Activated CD4-positive, alpha-beta memory T cell treated with anti-CD3 and anti-CD28 coated beads for 36 hours (primary cell): ENCODE measurements at regions of chr12 and their contacts with region 1.

Region 1: DNA sequence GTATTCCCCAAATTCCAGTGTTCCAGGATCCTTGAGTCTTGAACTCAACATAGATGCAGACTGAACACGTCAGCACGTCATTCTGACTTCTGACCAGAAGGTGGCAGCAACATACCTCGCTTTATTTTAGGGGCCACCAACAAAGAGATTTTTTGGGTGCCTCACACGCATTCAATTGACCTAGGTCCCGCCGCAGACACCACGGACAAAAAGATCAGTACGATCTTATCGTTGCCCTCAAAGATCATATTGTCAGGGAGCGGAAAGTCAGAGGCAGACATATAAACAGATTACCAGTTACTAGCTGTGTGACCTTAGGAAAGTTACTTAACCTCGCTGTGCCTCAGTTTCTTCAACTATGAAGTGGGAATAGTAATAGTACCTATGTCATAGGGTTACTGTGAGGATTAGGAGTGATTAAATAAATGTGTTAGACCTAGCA is 6.5 kb upstream of the PRPH start:
- DNase-seq: peak; percentile 80
- H3K4me3 Mint-ChIP-seq: no peak overlapping the region
- H3K27ac Mint-ChIP-seq: no peak overlapping the region
- H3K4me1 Mint-ChIP-seq: no peaks in the 10 kb centered on the region
- H3K27me3 Mint-ChIP-seq: peaks cover 23% of the 10 kb centered on the region

Region 2: GRCh38 chr12:49336645-49337584 is 48.5 kb after region 1 on chr12 and contains the start of gene C1QL4:
- CTCF ChIA-PET with region 1: interaction called, 234 read pairs
- POLR2A ChIA-PET with region 1: interaction called, 7 read pairs
- intact Hi-C with region 1: loop called (anchors 1 kb)
- DNase-seq: peak; percentile 89
- H3K4me3 Mint-ChIP-seq: peak within 1 kb of the TSS; percentile 40
- H3K27ac Mint-ChIP-seq: no peak within 1 kb of the TSS
- H3K4me1 Mint-ChIP-seq: peaks cover 23% of the 10 kb centered on the region
- H3K27me3 Mint-ChIP-seq: peaks cover 64% of the 10 kb centered on the region
- total RNA-seq, gene C1QL4: not detected

Region 3: GRCh38 chr12:49553512-49554088 is 265.2 kb after region 1 on chr12:
- CTCF ChIA-PET with region 1: no interaction called
- POLR2A ChIA-PET with region 1: no interaction called
- intact Hi-C with region 1: no loop called
- DNase-seq: no peak
- H3K4me3 Mint-ChIP-seq: no peak overlapping the region
- H3K27ac Mint-ChIP-seq: no peak overlapping the region
- H3K4me1 Mint-ChIP-seq: peaks cover 3% of the 10 kb centered on the region
- H3K27me3 Mint-ChIP-seq: peaks cover 4% of the 10 kb centered on the region